Activated naive CD4-positive, alpha-beta T cell treated with anti-CD3 and anti-CD28 coated beads for 36 hours (primary cell): ENCODE measurements at regions of chr20 and their contacts with region 1.

Region 1: DNA sequence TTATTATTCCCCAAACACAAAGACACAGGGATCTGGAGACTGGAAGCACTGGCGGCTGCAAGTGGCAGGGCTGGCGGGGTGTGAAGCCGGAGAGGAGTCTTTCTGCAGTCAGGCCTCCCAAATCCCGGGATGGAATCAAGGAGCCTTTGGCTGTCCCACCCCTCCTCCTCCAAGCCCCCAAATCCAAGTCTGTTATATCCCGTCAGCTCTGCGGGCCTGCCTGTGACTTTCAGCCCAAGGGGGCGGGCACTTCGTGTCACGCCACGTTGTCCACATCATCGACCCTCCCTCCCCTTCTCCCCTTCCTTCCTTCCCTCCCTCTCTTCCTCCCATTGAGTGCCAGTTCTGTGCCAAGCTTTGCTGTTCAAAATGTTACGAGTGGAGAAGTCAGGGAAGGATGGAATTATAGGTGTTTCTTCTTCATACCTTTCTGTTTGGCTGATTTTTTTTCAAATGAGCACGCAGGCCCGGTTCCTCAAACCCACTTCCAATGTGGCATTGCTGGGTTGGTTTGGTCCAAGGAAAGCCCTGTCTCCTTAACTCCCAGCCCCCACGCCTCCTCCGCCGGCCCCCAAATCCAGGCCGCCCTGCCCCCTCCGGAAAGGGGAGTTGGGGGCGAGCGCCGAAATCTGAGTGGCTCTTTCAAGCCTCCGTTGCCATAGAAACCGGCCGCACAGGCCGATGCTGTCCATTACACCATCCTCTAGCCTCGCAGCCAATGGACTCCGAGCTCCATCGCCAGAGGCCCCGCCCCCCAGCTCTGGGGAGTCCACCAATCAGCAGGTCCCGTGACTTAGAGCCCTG is 12.7 kb downstream of the ZCCHC3 start:
- DNase-seq: peak; percentile 93
- H3K4me3 Mint-ChIP-seq: peak overlapping the region; percentile 74
- H3K27ac Mint-ChIP-seq: peak overlapping the region; percentile 43
- H3K4me1 Mint-ChIP-seq: peaks cover 11% of the 10 kb centered on the region
- H3K27me3 Mint-ChIP-seq: no peaks in the 10 kb centered on the region

Region 2: GRCh38 chr20:251354-251753 is 58.7 kb before region 1 on chr20:
- CTCF ChIA-PET with region 1: no interaction called
- intact Hi-C with region 1: no loop called
- DNase-seq: no peak
- H3K4me3 Mint-ChIP-seq: no peak overlapping the region
- H3K27ac Mint-ChIP-seq: no peak overlapping the region
- H3K4me1 Mint-ChIP-seq: peaks cover 9% of the 10 kb centered on the region
- H3K27me3 Mint-ChIP-seq: no peaks in the 10 kb centered on the region

Region 3: GRCh38 chr20:297098-297924 is 12.7 kb before region 1 on chr20 and contains the start of gene ZCCHC3:
- CTCF ChIA-PET with region 1: interaction called, 5 read pairs
- intact Hi-C with region 1: loop called (anchors 1 kb)
- DNase-seq: peak; percentile 87
- H3K4me3 Mint-ChIP-seq: peak within 1 kb of the TSS; percentile 100
- H3K27ac Mint-ChIP-seq: peak within 1 kb of the TSS; percentile 100
- H3K4me1 Mint-ChIP-seq: peaks cover 30% of the 10 kb centered on the region
- H3K27me3 Mint-ChIP-seq: no peaks in the 10 kb centered on the region
- total RNA-seq, gene ZCCHC3: 13.6 to 15.6 TPM

Region 4: GRCh38 chr20:478949-479429 is 168.9 kb after region 1 on chr20:
- CTCF ChIA-PET with region 1: no interaction called
- intact Hi-C with region 1: no loop called
- DNase-seq: peak; percentile 41
- H3K4me3 Mint-ChIP-seq: no peak overlapping the region
- H3K27ac Mint-ChIP-seq: no peak overlapping the region
- H3K4me1 Mint-ChIP-seq: peaks cover 22% of the 10 kb centered on the region
- H3K27me3 Mint-ChIP-seq: no peaks in the 10 kb centered on the region